Mammary epithelial cell (primary cell): ENCODE measurements at regions of chr7 and their contacts with region 1.

Region 1: GRCh38 chr7:46352004-46352954 is 431.2 kb upstream of the IGFBP3 start:
- DNase-seq: peak; percentile 47
- H3K4me3 ChIP-seq: no peak overlapping the region
- H3K27ac ChIP-seq: no peak overlapping the region
- H3K4me1 ChIP-seq: no peaks in the 10 kb centered on the region
- H3K27me3 ChIP-seq: no peaks in the 10 kb centered on the region
- CTCF ChIP-seq: peak; percentile 53 to 89

Region 2: GRCh38 chr7:45890902-45891461 is 461.3 kb before region 1 on chr7:
- CTCF ChIA-PET with region 1: no interaction called
- dilution Hi-C with region 1: no loop called
- in situ Hi-C with region 1: no loop called
- intact Hi-C with region 1: loop called (anchors 1 kb)
- DNase-seq: peak; percentile 18
- H3K4me3 ChIP-seq: no peak overlapping the region
- H3K27ac ChIP-seq: no peak overlapping the region
- H3K4me1 ChIP-seq: peaks cover 8% of the 10 kb centered on the region
- H3K27me3 ChIP-seq: peaks cover 4% of the 10 kb centered on the region
- CTCF ChIP-seq: peak; percentile 43 to 54

Region 3: DNA sequence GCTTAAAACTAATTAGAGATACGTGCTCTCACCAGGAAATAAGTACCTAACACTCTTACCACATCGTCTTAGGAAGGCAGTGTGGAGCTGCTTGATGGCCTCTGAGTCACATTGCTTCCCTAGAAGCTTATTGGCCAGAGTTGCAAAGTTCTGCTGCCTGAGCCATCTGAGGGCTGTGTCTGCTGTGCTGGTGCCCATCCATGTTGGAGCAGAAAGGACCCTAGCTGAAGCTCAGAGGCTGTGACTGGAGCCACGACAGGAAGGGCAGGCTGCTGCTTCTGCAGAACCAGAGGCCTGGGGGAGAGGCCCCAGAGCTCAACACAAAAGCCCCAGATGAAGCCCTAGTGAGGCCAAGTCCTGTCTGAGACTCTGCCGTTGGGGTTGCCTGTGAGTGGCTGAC is 366.4 kb before region 1 on chr7:
- CTCF ChIA-PET with region 1: no interaction called
- dilution Hi-C with region 1: no loop called
- in situ Hi-C with region 1: no loop called
- intact Hi-C with region 1: loop called (anchors 2 kb)
- DNase-seq: peak; percentile 61
- H3K4me3 ChIP-seq: no peak overlapping the region
- H3K27ac ChIP-seq: no peak overlapping the region
- H3K4me1 ChIP-seq: peaks cover 17% of the 10 kb centered on the region
- H3K27me3 ChIP-seq: no peaks in the 10 kb centered on the region
- CTCF ChIP-seq: no peak

Region 4: GRCh38 chr7:46215987-46216567 is 136.2 kb before region 1 on chr7:
- CTCF ChIA-PET with region 1: no interaction called
- dilution Hi-C with region 1: no loop called
- in situ Hi-C with region 1: no loop called
- intact Hi-C with region 1: loop called (anchors 5 kb)
- DNase-seq: peak; percentile 95
- H3K4me3 ChIP-seq: no peak overlapping the region
- H3K27ac ChIP-seq: peak overlapping the region; percentile 62
- H3K4me1 ChIP-seq: peaks cover 33% of the 10 kb centered on the region
- H3K27me3 ChIP-seq: no peaks in the 10 kb centered on the region
- CTCF ChIP-seq: no peak

Region 5: DNA sequence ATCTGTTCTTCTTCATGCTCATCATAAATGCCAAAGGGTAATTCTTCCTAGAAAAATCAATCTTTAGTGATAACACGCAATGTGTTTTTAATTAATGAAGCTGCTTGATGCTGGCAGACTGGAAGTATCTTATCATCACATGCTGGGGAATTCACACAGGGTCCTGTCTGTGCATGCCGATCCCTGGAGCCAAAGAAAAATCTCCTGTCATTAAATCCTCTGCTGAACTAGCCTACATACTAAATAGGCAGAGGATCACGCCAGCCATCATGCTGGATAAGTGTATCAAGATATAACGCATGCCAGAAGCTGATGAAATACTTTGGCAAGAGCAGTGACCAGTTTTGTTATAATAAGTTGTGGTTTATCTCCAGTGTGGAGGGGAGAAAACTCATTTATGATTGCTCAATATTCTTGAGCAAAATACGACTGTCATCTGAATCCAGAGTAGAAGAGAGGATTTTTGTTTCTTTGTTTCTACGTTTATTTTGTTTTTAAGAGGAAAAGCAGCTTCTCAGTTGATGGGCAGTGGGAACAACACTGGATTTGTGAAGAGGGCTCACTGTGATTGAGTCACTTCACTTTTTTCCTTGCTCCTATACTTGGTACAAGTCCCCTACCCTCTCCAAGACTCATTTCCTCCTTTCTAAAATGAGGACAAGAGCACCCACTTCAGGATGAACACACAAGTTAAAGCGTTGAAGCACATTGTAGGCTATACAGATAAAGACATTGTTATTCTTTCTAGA is 580.6 kb after region 1 on chr7:
- CTCF ChIA-PET with region 1: no interaction called
- dilution Hi-C with region 1: no loop called
- in situ Hi-C with region 1: loop called in 1 of 2 experiments (anchors 25 kb)
- intact Hi-C with region 1: loop called (anchors 2 kb)
- DNase-seq: peak; percentile 92
- H3K4me3 ChIP-seq: peak overlapping the region in 2 of 3 experiments; percentile 18 to 25
- H3K27ac ChIP-seq: peak overlapping the region; percentile 95
- H3K4me1 ChIP-seq: peaks cover 36% of the 10 kb centered on the region
- H3K27me3 ChIP-seq: no peaks in the 10 kb centered on the region
- CTCF ChIP-seq: peak; percentile 41 to 55

Region 6: GRCh38 chr7:47179812-47180515 is 827.7 kb after region 1 on chr7:
- CTCF ChIA-PET with region 1: no interaction called
- dilution Hi-C with region 1: no loop called
- in situ Hi-C with region 1: no loop called
- intact Hi-C with region 1: loop called (anchors 2 kb)
- DNase-seq: peak; percentile 29
- H3K4me3 ChIP-seq: no peak overlapping the region
- H3K27ac ChIP-seq: no peak overlapping the region
- H3K4me1 ChIP-seq: no peaks in the 10 kb centered on the region
- H3K27me3 ChIP-seq: no peaks in the 10 kb centered on the region
- CTCF ChIP-seq: peak; percentile 85